Uterus (tissue), 4 donors: ENCODE measurements at regions of chr13 and their contacts with region 1.

Region 1: GRCh38 chr13:44484562-44485138 is 91.5 kb downstream of the TSC22D1 start:
- DNase-seq: no peak
- H3K4me3 ChIP-seq: no peak overlapping the region
- H3K27ac ChIP-seq: no peak overlapping the region
- H3K4me1 ChIP-seq: no peaks in the 10 kb centered on the region
- H3K27me3 ChIP-seq: no peaks in the 10 kb centered on the region
- CTCF ChIP-seq: no peak
- POLR2A ChIP-seq: no peak

Region 2: GRCh38 chr13:44396701-44397580 is 87.7 kb before region 1 on chr13:
- intact Hi-C with region 1: no loop called
- DNase-seq: peak; percentile 43 to 61
- H3K4me3 ChIP-seq: no peak overlapping the region
- H3K27ac ChIP-seq: peak overlapping the region; percentile 66 to 74
- H3K4me1 ChIP-seq: no peaks in the 10 kb centered on the region
- H3K27me3 ChIP-seq: no peaks in the 10 kb centered on the region
- CTCF ChIP-seq: no peak
- POLR2A ChIP-seq: peak in 1 of 2 donors; percentile 13

Region 3: GRCh38 chr13:44969551-44970484 is 485.2 kb after region 1 on chr13:
- intact Hi-C with region 1: loop called (anchors 10 kb)
- DNase-seq: no peak
- H3K4me3 ChIP-seq: no peak overlapping the region
- H3K27ac ChIP-seq: peak overlapping the region; percentile 59 to 66
- H3K4me1 ChIP-seq: no peaks in the 10 kb centered on the region
- H3K27me3 ChIP-seq: no peaks in the 10 kb centered on the region
- CTCF ChIP-seq: peak; percentile 77 to 87 (median 82)
- POLR2A ChIP-seq: no peak